ENCODE measurements at regions of chr17 and their contacts with region 1.

Region 1: GRCh38 chr17:63555500-63556156 is 5.4 kb downstream of the DCAF7 start:
- DNase-seq: no peak
- H3K4me3 ChIP-seq: no peak overlapping the region
- H3K27ac ChIP-seq: no peak overlapping the region
- H3K4me1 ChIP-seq: peaks cover 12% of the 10 kb centered on the region
- H3K27me3 ChIP-seq: no peaks in the 10 kb centered on the region
- CTCF ChIP-seq: no peak

Region 2: DNA sequence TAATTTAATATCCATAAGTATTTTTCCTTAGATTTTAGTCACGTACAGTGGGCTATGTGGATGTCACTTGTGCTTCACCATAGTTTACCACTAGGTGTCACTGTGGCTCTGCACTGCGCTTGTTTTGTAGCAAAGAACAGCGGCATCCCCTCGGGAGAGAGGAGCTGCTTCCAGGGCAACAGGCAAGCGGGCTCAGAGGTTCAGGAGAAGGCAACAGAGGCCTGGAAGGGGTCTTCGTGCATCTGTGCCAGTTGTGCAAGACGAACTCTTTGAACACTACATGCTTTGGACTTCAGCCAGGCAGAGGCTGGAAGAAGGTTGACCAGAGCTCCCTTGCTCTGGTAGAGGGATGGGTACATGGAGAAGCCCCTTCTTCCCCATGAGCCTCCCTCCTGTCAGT is 130.1 kb before region 1 on chr17:
- CTCF ChIA-PET with region 1: no interaction called
- POLR2A ChIA-PET with region 1: interaction called, 10 read pairs
- intact Hi-C with region 1: no loop called
- DNase-seq: peak in 1 of 2 experiments; percentile 66
- H3K4me3 ChIP-seq: no peak overlapping the region
- H3K27ac ChIP-seq: no peak overlapping the region
- H3K4me1 ChIP-seq: no peaks in the 10 kb centered on the region
- H3K27me3 ChIP-seq: no peaks in the 10 kb centered on the region
- CTCF ChIP-seq: peak; percentile 96

Region 3: GRCh38 chr17:63741221-63742049 is 185.8 kb after region 1 on chr17 and contains the start of gene STRADA:
- CTCF ChIA-PET with region 1: no interaction called
- POLR2A ChIA-PET with region 1: no interaction called
- intact Hi-C with region 1: no loop called
- DNase-seq: peak; percentile 97 to 99
- H3K4me3 ChIP-seq: peak within 1 kb of the TSS; percentile 91
- H3K27ac ChIP-seq: peak within 1 kb of the TSS; percentile 72
- H3K4me1 ChIP-seq: peaks cover 15% of the 10 kb centered on the region
- H3K27me3 ChIP-seq: no peaks in the 10 kb centered on the region
- CTCF ChIP-seq: no peak
- total RNA-seq, gene STRADA: 28.8 and 30.6 TPM in 2 replicates